Prostate gland (tissue), 2 donors: ENCODE measurements at regions of chr16 and their contacts with region 1.

Region 1: DNA sequence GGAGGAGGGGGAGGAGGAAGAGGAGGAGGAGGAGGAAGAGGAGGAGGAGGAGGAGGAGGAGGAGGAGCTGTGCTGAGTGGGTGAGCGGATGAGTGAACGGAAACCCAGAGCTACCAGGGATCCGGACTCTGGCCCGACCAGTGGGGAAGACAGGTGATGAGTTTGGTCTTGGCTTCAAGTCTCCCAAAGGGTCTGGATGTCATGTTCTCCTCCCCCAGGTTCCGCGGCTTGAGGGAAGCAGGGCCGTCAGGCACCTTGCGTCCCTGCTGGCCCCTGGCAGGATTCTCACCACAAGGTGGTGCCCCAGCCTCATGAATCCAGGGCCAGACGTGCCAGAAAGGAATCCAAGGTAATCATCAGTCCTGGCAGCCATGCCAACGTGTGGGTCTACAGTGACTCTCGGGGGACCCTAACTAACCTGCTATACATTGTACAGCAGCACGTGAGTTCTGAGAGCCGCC is 13.5 kb upstream of the ABAT start:
- DNase-seq: peak; percentile 61
- H3K4me3 ChIP-seq: no peak overlapping the region
- H3K27ac ChIP-seq: no peak overlapping the region
- H3K4me1 ChIP-seq: no peaks in the 10 kb centered on the region
- H3K27me3 ChIP-seq: no peaks in the 10 kb centered on the region
- CTCF ChIP-seq: peak; percentile 43 to 85 (median 73)
- POLR2A ChIP-seq: no peak

Region 2: DNA sequence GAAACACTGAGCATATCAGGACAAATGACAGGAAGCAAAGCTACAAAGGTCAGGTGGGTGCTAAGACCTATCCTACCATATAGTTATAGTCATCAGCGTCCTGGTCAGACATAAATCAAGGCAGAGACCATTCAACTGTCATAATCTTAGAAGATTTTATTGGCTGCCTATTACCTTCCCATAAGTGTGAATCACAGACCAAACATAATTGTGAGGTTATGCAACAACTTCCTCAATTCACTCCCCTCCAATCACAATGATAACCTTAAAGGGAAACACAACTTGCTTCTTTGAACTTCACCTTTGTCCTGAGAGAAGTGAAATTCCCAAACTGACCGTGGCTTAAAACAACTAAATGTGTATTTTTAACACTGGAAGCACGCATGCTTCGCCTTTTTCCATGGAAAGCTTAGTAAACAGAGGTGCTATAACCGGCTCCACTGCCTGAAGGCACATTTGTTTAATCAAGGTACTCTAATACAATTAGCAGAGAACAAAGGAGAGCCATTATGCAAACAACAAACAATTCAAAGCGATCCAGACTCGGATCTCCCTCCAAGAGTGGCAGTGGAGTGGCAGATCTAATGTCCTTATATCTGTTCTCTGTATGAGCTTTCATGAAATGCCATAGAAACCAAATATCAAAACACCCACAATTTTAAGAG is 155.4 kb before region 1 on chr16:
- intact Hi-C with region 1: no loop called
- DNase-seq: no peak
- H3K4me3 ChIP-seq: no peak overlapping the region
- H3K27ac ChIP-seq: no peak overlapping the region
- H3K4me1 ChIP-seq: no peaks in the 10 kb centered on the region
- H3K27me3 ChIP-seq: no peaks in the 10 kb centered on the region
- CTCF ChIP-seq: no peak
- POLR2A ChIP-seq: no peak

Region 3: DNA sequence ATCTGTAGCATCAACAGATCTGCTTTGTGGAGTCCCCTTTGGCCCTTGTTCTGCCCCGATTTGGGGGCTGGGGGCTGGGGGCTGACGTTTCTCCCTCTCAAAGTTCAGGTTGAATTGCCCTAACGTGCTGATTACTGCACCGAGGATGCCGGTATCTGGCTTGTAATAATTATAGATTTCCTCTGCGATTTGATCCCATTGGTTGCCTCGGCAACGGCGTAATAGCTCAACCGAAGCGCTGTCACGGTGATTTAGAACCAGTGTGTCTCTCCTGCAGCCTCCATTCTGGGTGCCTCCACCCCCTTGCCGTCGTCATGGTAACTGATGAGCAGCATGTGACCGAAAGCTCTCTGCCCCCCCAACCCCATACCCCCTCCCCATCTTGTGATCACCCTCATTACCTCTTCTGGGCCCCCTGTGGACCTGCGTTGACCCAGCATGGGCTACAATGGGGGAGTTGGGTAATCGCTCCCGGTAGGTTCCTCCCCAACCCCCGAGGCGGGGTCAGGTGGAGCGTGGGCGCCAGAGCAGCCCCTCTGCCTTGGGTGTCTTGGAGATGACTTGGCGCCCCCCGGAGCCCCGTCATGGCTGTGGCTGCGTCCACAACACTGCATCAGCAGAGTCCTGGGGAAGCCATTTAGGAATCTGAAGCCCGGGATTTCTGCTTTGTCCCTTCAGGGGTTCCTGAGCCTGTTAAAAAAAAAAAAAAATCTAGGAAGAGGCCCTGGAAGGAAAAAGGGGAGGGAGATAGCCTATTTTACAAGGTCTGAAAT is 51.9 kb after region 1 on chr16:
- intact Hi-C with region 1: no loop called
- DNase-seq: no peak
- H3K4me3 ChIP-seq: no peak overlapping the region
- H3K27ac ChIP-seq: no peak overlapping the region
- H3K4me1 ChIP-seq: no peaks in the 10 kb centered on the region
- H3K27me3 ChIP-seq: no peaks in the 10 kb centered on the region
- CTCF ChIP-seq: no peak
- POLR2A ChIP-seq: no peak

Region 4: DNA sequence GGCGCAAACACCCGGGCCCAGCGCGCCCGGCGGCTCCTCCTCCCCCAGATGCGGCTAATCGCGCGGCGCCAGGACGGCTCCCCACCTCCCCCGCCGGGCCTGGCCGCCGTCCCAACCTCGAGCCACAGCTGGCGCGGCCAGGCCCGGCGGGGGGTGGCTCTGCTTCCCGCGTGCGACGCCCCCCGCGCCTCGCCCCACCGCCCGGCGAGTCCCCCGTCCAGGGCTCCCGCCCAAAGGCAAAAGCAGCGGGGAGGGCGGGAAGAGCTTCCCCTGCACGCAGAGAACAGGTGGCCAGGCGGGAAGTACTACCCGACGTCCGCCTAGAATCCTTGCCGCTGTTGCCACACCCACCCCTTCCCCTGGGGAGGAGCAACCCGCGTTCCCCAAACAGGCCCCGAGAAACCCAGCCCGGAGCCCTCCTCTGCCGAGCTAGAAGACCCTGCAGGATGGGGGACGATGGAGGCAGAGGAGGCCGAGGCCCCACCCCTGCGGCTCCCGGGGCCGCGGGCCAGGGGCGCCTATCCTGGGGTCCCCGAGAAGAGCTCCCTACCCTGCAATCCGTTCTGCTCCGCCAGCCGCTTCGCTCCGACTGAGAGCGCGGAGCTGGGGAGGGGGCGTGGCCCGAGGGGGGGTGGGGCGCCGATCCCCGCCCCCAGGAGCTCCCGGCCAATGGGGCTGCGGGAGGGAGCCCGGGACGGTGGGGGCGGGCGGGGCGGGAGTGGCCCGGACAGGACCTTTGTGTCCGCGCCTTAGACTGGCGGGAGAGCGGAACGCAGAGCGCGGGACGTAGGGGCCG is 207.7 kb after region 1 on chr16 and contains the start of gene CARHSP1:
- intact Hi-C with region 1: no loop called
- DNase-seq: peak; percentile 87
- H3K4me3 ChIP-seq: peak within 1 kb of the TSS; percentile 54 to 56
- H3K27ac ChIP-seq: peak within 1 kb of the TSS; percentile 66 to 78
- H3K4me1 ChIP-seq: peaks cover 11% of the 10 kb centered on the region
- H3K27me3 ChIP-seq: no peaks in the 10 kb centered on the region
- CTCF ChIP-seq: peak in 1 of 4 experiments; percentile 7
- POLR2A ChIP-seq: peak; percentile 89
- total RNA-seq, gene CARHSP1: 51.0 to 146 TPM

Region 5: DNA sequence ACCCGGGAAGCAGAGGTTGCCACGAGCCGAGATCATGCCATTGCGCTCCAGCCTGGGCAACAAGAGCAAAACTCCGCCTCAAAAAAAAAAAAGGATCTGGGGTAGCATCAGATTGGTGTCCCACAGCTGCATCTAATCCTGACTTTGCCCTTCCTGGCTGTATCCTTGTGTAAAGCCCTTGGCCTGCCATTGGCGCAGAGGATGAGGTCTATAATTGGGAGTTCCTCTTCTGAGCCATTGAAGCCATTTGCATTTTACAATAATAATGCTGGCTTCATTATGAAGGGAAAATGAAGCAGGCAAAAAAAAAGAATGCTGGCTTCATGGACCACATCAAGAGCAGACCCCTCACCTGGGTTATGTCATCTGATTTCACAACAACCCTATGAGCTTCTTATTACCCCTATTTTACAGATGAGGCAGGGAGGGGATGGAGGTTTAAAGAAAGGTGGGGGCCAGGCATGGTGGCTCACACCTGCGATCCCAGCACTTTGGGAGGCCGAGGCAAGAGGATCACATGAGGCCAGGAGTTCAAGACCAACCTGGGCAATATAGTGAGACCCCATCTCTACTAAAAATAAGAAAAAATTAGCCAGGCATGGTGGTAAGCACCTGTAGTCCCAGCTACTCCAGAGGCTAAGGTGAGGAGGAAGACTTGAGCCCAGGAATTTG is 220.1 kb after region 1 on chr16:
- intact Hi-C with region 1: loop called (anchors 2 kb)
- DNase-seq: no peak
- H3K4me3 ChIP-seq: no peak overlapping the region
- H3K27ac ChIP-seq: no peak overlapping the region
- H3K4me1 ChIP-seq: no peaks in the 10 kb centered on the region
- H3K27me3 ChIP-seq: no peaks in the 10 kb centered on the region
- CTCF ChIP-seq: no peak
- POLR2A ChIP-seq: no peak